Sigmoid colon (tissue), 7 donors: ENCODE measurements at regions of chr4 and their contacts with region 1.

Region 1: GRCh38 chr4:48779998-48780742 is at the start of gene FRYL:
- DNase-seq: peak; percentile 100
- H3K4me3 ChIP-seq: peak within 1 kb of the TSS; percentile 74 to 96 (median 95)
- H3K27ac ChIP-seq: peak within 1 kb of the TSS; percentile 94 to 99 (median 98)
- H3K4me1 ChIP-seq: peaks cover 0 to 39% (median 32%) of the 10 kb centered on the region in 4 donors
- H3K27me3 ChIP-seq: no peaks in the 10 kb centered on the region
- CTCF ChIP-seq: no peak
- EP300 ChIP-seq: no peak
- POLR2A ChIP-seq: peak; percentile 60 to 64
- total RNA-seq, gene FRYL: 44.9 to 72.4 (median 63.2) TPM

Region 2: DNA sequence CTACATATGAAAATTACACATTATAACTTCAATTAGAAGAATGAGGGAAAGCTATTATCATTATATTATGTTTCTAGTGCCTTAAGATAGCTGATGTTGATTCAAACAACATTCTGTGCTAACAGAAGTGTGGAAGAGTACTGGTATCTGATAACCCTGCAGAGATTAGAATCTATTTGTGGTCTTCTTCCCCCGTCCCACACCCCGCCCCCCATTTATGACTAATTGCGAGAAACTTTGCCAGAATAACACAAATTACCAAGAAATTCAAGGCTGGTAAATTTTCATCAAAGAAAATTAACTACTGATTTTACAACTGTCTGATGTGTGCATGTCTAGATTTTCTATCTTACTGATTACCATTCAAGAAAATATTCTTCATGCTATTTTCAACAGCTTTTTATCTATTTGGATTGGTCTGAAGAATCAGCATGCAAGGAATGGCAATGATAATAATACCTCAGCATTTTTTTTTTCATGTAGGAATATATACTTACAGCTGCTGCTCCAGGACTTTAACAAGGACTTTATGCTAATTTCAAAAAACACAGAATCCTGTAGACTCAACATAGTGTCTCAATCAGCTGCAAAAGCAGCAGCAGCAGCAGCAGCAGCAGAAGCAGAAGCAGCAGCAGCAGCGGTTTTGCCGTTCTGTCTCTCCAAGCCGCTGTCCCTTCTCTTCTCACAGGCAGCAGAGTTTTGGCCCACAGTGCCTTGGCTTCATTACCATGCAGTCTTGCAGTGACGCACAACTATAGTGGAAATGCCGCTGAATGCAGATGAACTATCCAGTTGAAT is 126.8 kb before region 1 on chr4:
- intact Hi-C with region 1: loop called (anchors 5 kb)
- DNase-seq: peak; percentile 73
- H3K4me3 ChIP-seq: peak overlapping the region in 1 of 4 donors; percentile 5
- H3K27ac ChIP-seq: peak overlapping the region in 1 of 4 donors; percentile 39
- H3K4me1 ChIP-seq: peaks cover 0 to 28% (median 26%) of the 10 kb centered on the region in 4 donors
- H3K27me3 ChIP-seq: no peaks in the 10 kb centered on the region
- CTCF ChIP-seq: no peak
- EP300 ChIP-seq: no peak
- POLR2A ChIP-seq: no peak

Region 3: GRCh38 chr4:48727666-48728459 is 52.3 kb before region 1 on chr4:
- intact Hi-C with region 1: no loop called
- DNase-seq: no peak
- H3K4me3 ChIP-seq: no peak overlapping the region
- H3K27ac ChIP-seq: no peak overlapping the region
- H3K4me1 ChIP-seq: peaks cover 0 to 21% (median 6%) of the 10 kb centered on the region in 4 donors
- H3K27me3 ChIP-seq: no peaks in the 10 kb centered on the region
- CTCF ChIP-seq: no peak
- EP300 ChIP-seq: no peak
- POLR2A ChIP-seq: no peak